Uterus (tissue), 4 donors: ENCODE measurements at regions of chr17 and their contacts with region 1.

Region 1: GRCh38 chr17:79520167-79521165 is 90.4 kb downstream of the RBFOX3 start:
- DNase-seq: no peak
- H3K4me3 ChIP-seq: no peak overlapping the region
- H3K27ac ChIP-seq: no peak overlapping the region
- H3K4me1 ChIP-seq: peaks cover 0 to 4% of the 10 kb centered on the region in 2 donors
- H3K27me3 ChIP-seq: no peaks in the 10 kb centered on the region
- CTCF ChIP-seq: no peak
- POLR2A ChIP-seq: no peak

Region 2: GRCh38 chr17:79573196-79573896 is 52.9 kb after region 1 on chr17:
- intact Hi-C with region 1: loop called (anchors 2 kb)
- DNase-seq: no peak
- H3K4me3 ChIP-seq: no peak overlapping the region
- H3K27ac ChIP-seq: no peak overlapping the region
- H3K4me1 ChIP-seq: no peaks in the 10 kb centered on the region
- H3K27me3 ChIP-seq: no peaks in the 10 kb centered on the region
- CTCF ChIP-seq: no peak
- POLR2A ChIP-seq: no peak